Heart right ventricle (tissue), 16 donors: ENCODE measurements at regions of chr17 and their contacts with region 1.

Region 1: DNA sequence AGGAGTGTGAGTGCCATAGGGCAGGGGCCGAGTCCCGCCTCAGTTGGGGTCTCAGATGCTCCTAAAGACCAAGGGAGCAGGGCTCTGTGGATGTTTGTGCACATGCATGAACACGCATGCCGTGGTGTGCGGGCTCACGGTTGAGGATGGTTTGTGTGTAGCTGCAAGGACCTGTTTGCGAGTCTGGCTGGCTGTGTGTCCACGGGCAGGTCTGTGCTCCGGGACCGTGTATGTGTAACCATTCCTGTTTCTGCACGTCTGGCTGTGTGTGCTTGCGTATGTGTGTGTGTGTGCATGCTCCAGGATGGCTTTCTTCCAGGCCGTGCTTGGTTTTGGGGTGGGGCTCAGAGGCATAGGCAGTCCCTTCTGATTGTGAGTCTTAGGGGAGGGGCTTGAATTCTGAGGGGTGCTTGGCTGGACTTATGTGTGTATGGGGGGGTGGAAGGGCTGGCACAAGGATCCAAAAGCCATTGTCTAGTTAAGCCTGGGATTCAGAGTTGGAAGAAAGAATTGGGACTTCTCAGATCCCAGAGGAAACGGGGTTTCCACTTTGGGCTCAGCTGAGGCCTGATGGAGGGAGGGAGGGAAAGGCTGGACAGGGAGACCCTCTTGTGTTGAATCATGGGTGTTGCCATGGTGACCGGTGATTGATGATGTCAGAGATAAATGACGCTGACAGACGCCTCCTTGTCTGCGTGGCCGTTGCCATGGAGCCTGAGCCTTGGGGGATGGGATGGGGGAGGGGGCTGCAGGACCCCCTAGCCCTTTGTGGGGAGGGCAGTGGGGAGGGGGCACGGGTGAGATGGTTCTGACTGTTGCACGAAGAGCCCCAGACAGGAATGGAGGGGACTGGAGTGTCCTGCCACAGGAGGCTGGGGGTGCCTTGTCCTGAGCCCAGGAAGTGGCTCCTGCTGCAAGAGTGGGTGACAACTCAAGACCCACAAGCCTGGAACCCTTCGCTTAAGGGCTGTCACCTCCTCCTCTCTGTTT is 14.3 kb downstream of the GJD3 start:
- DNase-seq: peak in 1 of 2 donors; percentile 70
- ATAC-seq: peak in 1 of 8 donors; percentile 6
- H3K4me3 ChIP-seq: peak overlapping the region in 4 of 10 donors; percentile 3 to 25 (median 14)
- H3K27ac ChIP-seq: peak overlapping the region in 6 of 10 donors; percentile 65 to 99 (median 98)
- H3K4me1 ChIP-seq: peaks cover 42 to 92% (median 74%) of the 10 kb centered on the region in 9 donors
- H3K27me3 ChIP-seq: no peaks in the 10 kb centered on the region
- CTCF ChIP-seq: no peak

Region 2: DNA sequence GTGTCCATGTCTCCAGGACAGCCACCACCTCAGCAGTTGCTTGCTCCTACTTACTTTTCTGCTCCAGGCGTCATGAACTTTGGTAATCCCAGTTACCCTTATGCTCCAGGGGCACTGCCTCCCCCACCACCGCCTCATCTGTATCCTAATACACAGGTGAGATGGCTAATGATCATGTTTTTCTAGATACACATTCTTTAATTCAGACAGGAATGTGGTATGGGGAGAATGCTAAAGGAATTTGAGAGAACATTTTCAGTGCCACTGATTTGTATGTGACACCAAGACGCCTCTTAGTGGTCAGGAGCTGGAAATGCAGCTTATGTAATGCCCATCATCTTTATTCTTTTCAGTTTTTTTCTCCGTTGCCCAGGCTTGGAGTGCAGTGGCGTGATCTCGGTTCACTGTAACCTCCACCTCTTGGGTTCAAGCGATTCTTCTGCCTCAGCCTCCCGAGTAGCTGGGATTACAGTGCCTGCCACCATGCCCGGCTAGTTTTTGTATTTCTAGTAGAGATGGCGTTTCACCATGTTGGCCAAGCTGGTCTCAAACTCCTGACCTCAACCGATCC is 181.9 kb before region 1 on chr17:
- intact Hi-C with region 1: no loop called
- DNase-seq: peak in 1 of 2 donors; percentile 32
- ATAC-seq: peak; percentile 29 to 67 (median 60)
- H3K4me3 ChIP-seq: no peak overlapping the region
- H3K27ac ChIP-seq: peak overlapping the region in 6 of 10 donors; percentile 27 to 67 (median 42)
- H3K4me1 ChIP-seq: peaks cover 0 to 12% (median 6%) of the 10 kb centered on the region in 9 donors
- H3K27me3 ChIP-seq: no peaks in the 10 kb centered on the region
- CTCF ChIP-seq: peak; percentile 68 to 89 (median 82)

Region 3: DNA sequence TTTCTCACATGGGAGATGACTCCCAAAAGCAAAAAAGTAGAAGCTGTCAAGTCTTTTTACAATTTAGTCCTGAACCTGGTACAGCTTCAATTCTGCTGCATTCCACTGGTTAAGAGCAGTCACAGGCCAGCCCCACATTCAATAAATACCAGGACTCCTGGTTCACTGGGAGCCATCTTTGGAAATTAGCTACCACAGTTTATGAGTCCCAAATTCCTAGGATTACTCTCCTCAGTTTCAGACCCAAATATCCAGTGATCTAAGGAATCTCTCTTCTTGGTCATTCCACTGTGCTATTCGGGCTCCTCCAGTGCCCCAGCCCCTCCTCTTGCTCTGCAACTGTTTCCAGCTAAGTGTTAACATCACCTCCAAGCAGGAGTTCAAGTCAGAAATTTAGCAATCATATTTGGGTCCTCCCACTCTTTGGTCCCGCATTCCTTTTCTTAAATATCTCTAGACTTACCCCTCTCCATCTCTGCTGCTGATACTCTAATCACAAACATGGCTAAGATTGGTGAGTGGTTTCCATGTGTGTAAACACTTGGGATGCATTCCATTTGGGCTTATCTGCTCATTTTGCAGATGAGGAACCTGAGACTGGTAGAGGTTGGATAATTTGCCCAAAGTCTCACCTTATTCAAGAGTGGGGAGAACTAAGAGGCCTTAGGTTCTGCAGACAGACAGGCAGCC is 140.7 kb before region 1 on chr17:
- intact Hi-C with region 1: loop called in 7 of 10 experiments (anchors 5 to 10 kb)
- DNase-seq: no peak
- ATAC-seq: no peak
- H3K4me3 ChIP-seq: no peak overlapping the region
- H3K27ac ChIP-seq: no peak overlapping the region
- H3K4me1 ChIP-seq: no peaks in the 10 kb centered on the region
- H3K27me3 ChIP-seq: no peaks in the 10 kb centered on the region
- CTCF ChIP-seq: no peak

Region 4: GRCh38 chr17:40309031-40309948 is 40.9 kb before region 1 on chr17 and contains the start of gene RARA:
- intact Hi-C with region 1: loop called in 6 of 10 experiments (anchors 2 to 5 kb)
- DNase-seq: peak in 1 of 2 donors; percentile 49
- ATAC-seq: peak in 7 of 8 donors; percentile 19 to 56 (median 34)
- H3K4me3 ChIP-seq: peak within 1 kb of the TSS in 9 of 10 donors; percentile 41 to 61 (median 54)
- H3K27ac ChIP-seq: peak within 1 kb of the TSS in 9 of 10 donors; percentile 35 to 98 (median 86)
- H3K4me1 ChIP-seq: peaks cover 46 to 93% (median 80%) of the 10 kb centered on the region in 9 donors
- H3K27me3 ChIP-seq: no peaks in the 10 kb centered on the region
- CTCF ChIP-seq: no peak
- total RNA-seq, gene RARA: 11.2 to 34.0 (median 18.3) TPM

Region 5: GRCh38 chr17:40317880-40318829 is 32.1 kb before region 1 on chr17:
- intact Hi-C with region 1: loop called in 2 of 10 experiments (anchors 2 to 5 kb)
- DNase-seq: peak; percentile 94 to 96
- ATAC-seq: peak; percentile 86 to 93 (median 91)
- H3K4me3 ChIP-seq: peak overlapping the region; percentile 75 to 100 (median 94)
- H3K27ac ChIP-seq: peak overlapping the region; percentile 83 to 98 (median 96)
- H3K4me1 ChIP-seq: peaks cover 47 to 96% (median 88%) of the 10 kb centered on the region in 9 donors
- H3K27me3 ChIP-seq: no peaks in the 10 kb centered on the region
- CTCF ChIP-seq: peak in 1 of 9 donors; percentile 11

Region 6: DNA sequence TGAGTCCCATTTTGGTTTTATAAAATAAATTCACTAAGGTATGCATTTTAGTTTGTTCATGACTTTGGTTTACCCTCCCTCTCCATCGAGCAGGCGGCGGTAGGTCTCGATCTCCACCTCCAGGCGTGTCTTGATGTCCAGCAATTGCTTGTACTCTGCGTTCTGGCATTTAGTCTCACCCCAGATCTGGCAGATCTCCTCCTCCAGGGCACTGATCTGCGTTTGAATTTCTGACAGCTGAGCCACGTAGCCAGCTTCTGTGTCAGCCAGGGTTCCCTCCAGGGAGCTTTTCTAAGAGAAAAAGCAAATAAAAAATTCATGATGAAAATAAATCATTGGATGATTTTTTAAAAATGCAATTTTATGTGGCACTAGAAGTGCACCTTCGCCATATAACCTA is 349.2 kb after region 1 on chr17:
- intact Hi-C with region 1: no loop called
- DNase-seq: no peak
- ATAC-seq: no peak
- H3K4me3 ChIP-seq: no peak overlapping the region
- H3K27ac ChIP-seq: no peak overlapping the region
- H3K4me1 ChIP-seq: peaks cover 0 to 7% (median 0%) of the 10 kb centered on the region in 9 donors
- H3K27me3 ChIP-seq: peaks cover 0 to 52% (median 32%) of the 10 kb centered on the region in 7 donors
- CTCF ChIP-seq: no peak